ENCODE measurements at regions of chr4 and their contacts with region 1.

Region 1: DNA sequence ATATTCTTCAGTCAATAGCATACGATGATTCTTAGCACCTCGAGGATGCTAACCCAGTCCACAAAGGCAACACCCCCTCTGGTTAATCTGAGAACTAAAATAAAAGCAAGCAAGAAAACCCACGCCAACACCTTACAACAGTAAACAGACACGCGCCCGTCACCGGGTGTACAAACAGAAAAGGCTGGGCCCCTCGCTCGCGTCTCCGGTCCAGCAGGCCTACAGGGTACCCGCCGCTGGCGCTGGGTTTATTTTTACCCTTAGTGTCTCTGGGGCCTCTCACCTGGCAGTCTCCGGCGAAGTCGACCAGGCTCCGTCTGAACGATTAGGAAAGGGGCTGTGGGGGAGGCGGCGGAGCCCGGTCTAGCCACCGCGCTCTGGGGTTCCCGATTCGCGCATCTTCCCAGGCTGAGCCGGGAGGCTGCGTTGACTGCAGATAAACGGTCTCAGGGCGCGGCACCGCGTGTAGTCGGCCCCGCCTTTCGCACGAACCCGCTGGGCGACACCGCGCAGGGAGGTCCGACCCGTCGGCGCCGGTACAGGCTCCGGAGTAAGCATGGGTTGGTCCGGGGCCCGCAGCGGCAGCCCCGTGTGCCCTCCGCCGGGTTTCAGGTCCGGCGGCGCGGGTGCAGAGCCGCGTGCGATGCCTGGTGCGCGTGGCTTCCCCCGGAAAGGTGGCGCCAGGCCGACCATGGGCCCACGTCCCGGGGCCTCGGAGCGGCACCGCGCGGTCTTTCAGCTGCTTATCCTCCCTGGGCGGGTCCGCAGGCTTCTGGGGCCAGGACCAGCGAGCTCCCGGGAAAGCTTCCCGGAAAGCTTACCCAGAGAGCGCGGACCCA is 441 bp downstream of the SLC9B2 start:
- DNase-seq: peak; percentile 62
- H3K4me3 Mint-ChIP-seq: peak overlapping the region; percentile 82
- H3K27ac Mint-ChIP-seq: peak overlapping the region; percentile 98
- H3K4me1 Mint-ChIP-seq: peaks cover 47% of the 10 kb centered on the region
- H3K27me3 Mint-ChIP-seq: no peaks in the 10 kb centered on the region

Region 2: DNA sequence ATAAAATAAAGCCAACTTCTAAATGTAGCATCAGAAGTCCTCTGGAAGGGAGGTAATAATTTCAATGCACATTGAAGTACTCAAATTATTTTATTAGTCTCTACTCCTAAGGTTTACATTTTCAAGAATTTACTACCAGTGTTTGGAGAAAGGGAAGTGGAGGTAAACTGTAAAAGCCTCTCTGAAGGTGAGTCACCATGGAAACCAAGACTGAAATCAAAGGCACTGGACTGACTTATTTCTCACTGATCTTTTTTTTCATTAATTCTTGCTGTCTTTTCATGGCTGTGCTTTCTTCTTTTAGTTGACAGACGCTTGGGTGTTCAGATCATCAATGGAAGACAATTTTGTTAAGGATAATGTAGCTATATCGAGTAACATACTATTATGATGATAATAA is 740.5 kb before region 1 on chr4:
- CTCF ChIA-PET with region 1: no interaction called
- intact Hi-C with region 1: no loop called
- DNase-seq: no peak
- H3K4me3 Mint-ChIP-seq: no peak overlapping the region
- H3K27ac Mint-ChIP-seq: no peak overlapping the region
- H3K4me1 Mint-ChIP-seq: peaks cover 46% of the 10 kb centered on the region
- H3K27me3 Mint-ChIP-seq: no peaks in the 10 kb centered on the region

Region 3: DNA sequence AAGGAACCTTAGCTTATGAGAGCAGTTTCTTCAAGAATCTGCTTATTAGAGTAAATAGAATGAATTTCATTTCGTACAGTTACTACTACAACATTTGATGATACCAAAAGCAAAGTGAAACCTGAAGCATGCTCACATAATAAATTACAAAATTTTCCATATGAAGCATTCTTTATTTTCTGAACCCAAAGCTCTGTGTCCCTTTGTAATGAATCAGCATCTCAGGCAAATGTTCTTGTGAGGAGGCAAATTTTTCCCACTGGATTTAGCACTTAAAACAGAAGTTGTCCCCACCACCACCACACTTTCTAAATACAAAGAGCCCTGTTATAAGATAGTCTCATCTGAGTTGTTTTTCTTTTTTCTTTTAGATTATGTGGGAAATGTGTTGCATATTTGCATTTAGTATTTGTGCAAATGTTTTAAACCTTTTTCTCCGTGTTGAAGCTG is 645.6 kb before region 1 on chr4:
- CTCF ChIA-PET with region 1: no interaction called
- intact Hi-C with region 1: loop called (anchors 5 kb)
- DNase-seq: no peak
- H3K4me3 Mint-ChIP-seq: peak overlapping the region; percentile 82
- H3K27ac Mint-ChIP-seq: peak overlapping the region; percentile 81
- H3K4me1 Mint-ChIP-seq: peaks cover 8% of the 10 kb centered on the region
- H3K27me3 Mint-ChIP-seq: peaks cover 5% of the 10 kb centered on the region

Region 4: DNA sequence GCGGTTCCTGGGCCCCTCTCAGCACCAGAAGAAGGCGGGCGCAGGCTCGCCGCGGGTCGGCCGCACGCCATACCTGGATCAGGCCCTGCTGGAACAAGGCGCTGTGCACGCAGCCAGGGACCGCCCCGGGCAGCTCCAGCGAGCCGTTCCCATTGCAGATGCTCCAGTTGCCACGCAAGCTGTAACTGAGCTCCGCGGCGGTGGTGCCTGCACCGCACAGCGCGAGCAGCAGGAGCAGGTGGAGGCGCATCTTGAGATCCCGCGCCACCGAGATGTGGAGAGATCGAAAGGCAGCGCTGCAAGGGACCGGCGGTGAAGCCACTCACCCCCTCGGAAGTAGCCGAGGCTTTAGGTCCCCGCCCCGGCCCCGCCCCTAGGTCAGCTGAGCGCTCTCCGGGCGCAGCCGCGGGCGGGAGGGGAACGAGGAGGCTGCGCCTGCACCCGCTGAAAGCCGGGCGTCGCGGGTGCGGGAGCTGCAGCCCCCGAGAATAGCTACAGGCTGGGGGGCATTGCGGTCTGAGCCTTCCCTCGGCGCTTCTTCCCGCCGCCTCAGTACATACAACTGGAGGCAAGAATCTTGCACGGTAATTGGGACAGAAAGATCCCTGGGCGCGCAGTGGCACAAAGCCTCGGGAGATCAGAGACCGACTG is 315.4 kb before region 1 on chr4 and contains the start of gene MANBA:
- CTCF ChIA-PET with region 1: no interaction called
- intact Hi-C with region 1: loop called (anchors 1 kb)
- DNase-seq: peak; percentile 89
- H3K4me3 Mint-ChIP-seq: peak within 1 kb of the TSS; percentile 88
- H3K27ac Mint-ChIP-seq: peak within 1 kb of the TSS; percentile 36
- H3K4me1 Mint-ChIP-seq: peaks cover 27% of the 10 kb centered on the region
- H3K27me3 Mint-ChIP-seq: no peaks in the 10 kb centered on the region
- total RNA-seq, gene MANBA: 9.8 to 11.0 TPM

Region 5: GRCh38 chr4:103019308-103020124 is 56.6 kb before region 1 on chr4 and contains the start of gene SLC9B1:
- CTCF ChIA-PET with region 1: no interaction called
- intact Hi-C with region 1: loop called (anchors 1 kb)
- DNase-seq: peak; percentile 96
- H3K4me3 Mint-ChIP-seq: peak within 1 kb of the TSS; percentile 96
- H3K27ac Mint-ChIP-seq: peak within 1 kb of the TSS; percentile 97
- H3K4me1 Mint-ChIP-seq: peaks cover 20% of the 10 kb centered on the region
- H3K27me3 Mint-ChIP-seq: no peaks in the 10 kb centered on the region
- total RNA-seq, gene SLC9B1: 2.0 to 3.5 TPM

Region 6: DNA sequence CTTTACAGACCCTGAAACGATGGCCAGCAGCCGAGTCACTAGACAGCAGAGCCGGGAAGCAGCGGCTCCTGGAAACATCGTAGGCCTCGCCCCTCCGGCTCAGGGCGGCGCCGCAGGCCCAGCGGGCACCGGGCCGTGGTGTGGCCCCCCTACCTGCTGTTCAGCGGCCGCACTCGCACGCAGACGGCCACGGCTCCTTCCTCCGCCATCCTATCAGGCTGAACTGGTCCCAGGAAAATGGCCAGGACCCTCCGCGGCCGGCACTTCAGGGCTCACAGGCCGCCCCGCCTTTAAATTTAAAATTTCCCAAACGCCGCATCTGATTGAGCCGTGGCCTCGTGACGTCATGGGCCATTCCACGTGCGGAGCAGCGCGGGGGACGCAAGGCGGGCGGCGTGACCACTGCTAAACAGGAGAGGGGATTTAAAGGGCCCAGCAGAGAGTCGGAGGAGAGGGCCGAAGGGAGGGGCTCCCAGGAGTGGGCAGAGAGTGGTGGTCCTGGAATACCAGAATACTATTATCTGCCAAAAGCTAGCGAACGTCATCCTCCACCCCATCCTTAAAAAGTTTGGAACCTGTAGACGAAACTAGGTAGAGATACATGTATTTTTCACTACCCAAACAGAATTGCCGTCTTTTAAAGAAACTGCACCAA is 122.1 kb after region 1 on chr4 and contains the start of gene CENPE:
- CTCF ChIA-PET with region 1: no interaction called
- intact Hi-C with region 1: loop called (anchors 1 kb)
- DNase-seq: peak; percentile 89
- H3K4me3 Mint-ChIP-seq: peak within 1 kb of the TSS; percentile 87
- H3K27ac Mint-ChIP-seq: peak within 1 kb of the TSS; percentile 89
- H3K4me1 Mint-ChIP-seq: peaks cover 7% of the 10 kb centered on the region
- H3K27me3 Mint-ChIP-seq: peaks cover 3% of the 10 kb centered on the region
- total RNA-seq, gene CENPE: 38.1 to 45.2 TPM

Measured in activated naive CD4-positive, alpha-beta T cell treated with anti-CD3 and anti-CD28 coated beads for 36 hours (primary cell).